ENCODE measurements at regions of chr2 and their contacts with region 1.

Region 1: GRCh38 chr2:8303322-8303832 is 378.5 kb upstream of the ID2 start:
- DNase-seq: peak; percentile 77 to 89 (median 79)
- H3K4me3 ChIP-seq: peak overlapping the region in 1 of 3 experiments; percentile 6
- H3K4me3 Mint-ChIP-seq: peak overlapping the region; percentile 47 to 73
- H3K27ac ChIP-seq: peak overlapping the region; percentile 84 to 85
- H3K27ac Mint-ChIP-seq: peak overlapping the region; percentile 93 to 96 (median 96)
- H3K4me1 ChIP-seq: peaks cover 93 to 100% of the 10 kb centered on the region in 2 donors
- H3K4me1 Mint-ChIP-seq: peaks cover 95% of the 10 kb centered on the region
- H3K27me3 ChIP-seq: no peaks in the 10 kb centered on the region
- H3K27me3 Mint-ChIP-seq: peaks cover under 1 to 3% (median 1%) of the 10 kb centered on the region in 3 donors
- CTCF ChIP-seq: peak; percentile 49

Region 2: GRCh38 chr2:8004250-8004681 is 299.1 kb before region 1 on chr2:
- intact Hi-C with region 1: loop called in 1 of 2 experiments (anchors 10 kb)
- DNase-seq: peak; percentile 78 to 91 (median 85)
- H3K4me3 ChIP-seq: no peak overlapping the region
- H3K4me3 Mint-ChIP-seq: peak overlapping the region in 1 of 2 donors; percentile 5
- H3K27ac ChIP-seq: no peak overlapping the region
- H3K27ac Mint-ChIP-seq: peak overlapping the region in 6 of 7 donors; percentile 52 to 89 (median 67)
- H3K4me1 ChIP-seq: peaks cover 4 to 15% of the 10 kb centered on the region in 2 donors
- H3K4me1 Mint-ChIP-seq: peaks cover 20% of the 10 kb centered on the region
- H3K27me3 ChIP-seq: no peaks in the 10 kb centered on the region
- H3K27me3 Mint-ChIP-seq: peaks cover 0 to 2% (median 0%) of the 10 kb centered on the region in 3 donors
- CTCF ChIP-seq: no peak

Region 3: GRCh38 chr2:8193686-8194615 is 109.4 kb before region 1 on chr2:
- intact Hi-C with region 1: loop called in 1 of 2 experiments (anchors 10 kb)
- DNase-seq: peak in 2 of 3 donors; percentile 26 to 34
- H3K4me3 ChIP-seq: peak overlapping the region; percentile 24 to 63 (median 50)
- H3K4me3 Mint-ChIP-seq: peak overlapping the region; percentile 63 to 87
- H3K27ac ChIP-seq: peak overlapping the region; percentile 74 to 81
- H3K27ac Mint-ChIP-seq: peak overlapping the region; percentile 57 to 90 (median 84)
- H3K4me1 ChIP-seq: peaks cover 24 to 26% of the 10 kb centered on the region in 2 donors
- H3K4me1 Mint-ChIP-seq: peaks cover 26% of the 10 kb centered on the region
- H3K27me3 ChIP-seq: no peaks in the 10 kb centered on the region
- H3K27me3 Mint-ChIP-seq: peaks cover 0 to 2% (median 0%) of the 10 kb centered on the region in 3 donors
- CTCF ChIP-seq: no peak

Region 4: GRCh38 chr2:8252997-8253694 is 50.2 kb before region 1 on chr2:
- intact Hi-C with region 1: no loop called
- DNase-seq: peak in 1 of 3 donors; percentile 46
- H3K4me3 ChIP-seq: no peak overlapping the region
- H3K4me3 Mint-ChIP-seq: no peak overlapping the region
- H3K27ac ChIP-seq: no peak overlapping the region
- H3K27ac Mint-ChIP-seq: peak overlapping the region in 2 of 7 donors; percentile 27 to 35
- H3K4me1 ChIP-seq: peaks cover 12 to 14% of the 10 kb centered on the region in 2 donors
- H3K4me1 Mint-ChIP-seq: peaks cover 17% of the 10 kb centered on the region
- H3K27me3 ChIP-seq: no peaks in the 10 kb centered on the region
- H3K27me3 Mint-ChIP-seq: peaks cover 0 to 2% (median 2%) of the 10 kb centered on the region in 3 donors
- CTCF ChIP-seq: no peak

Region 5: DNA sequence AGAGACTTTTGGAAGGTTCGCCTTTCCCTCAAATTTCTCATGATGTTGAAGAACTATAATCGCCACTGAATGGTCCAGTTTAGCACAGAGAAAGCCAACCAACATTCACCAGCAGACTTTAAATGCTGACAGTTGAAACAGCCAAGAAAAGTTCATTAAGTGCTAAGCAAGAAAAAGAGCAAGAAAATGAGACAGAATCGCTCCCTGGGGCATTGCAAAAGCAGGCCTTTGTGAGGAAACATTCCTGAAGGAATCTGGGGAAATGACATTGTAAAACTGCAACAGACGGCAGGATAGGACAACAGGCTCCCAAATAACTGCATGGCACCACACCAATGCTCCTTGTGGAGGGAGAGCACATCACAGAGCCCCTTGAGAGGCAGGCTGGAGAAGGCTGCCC is 109.2 kb after region 1 on chr2:
- intact Hi-C with region 1: loop called in 1 of 2 experiments (anchors 10 kb)
- DNase-seq: no peak
- H3K4me3 ChIP-seq: no peak overlapping the region
- H3K4me3 Mint-ChIP-seq: peak overlapping the region in 1 of 2 donors; percentile 46
- H3K27ac ChIP-seq: no peak overlapping the region
- H3K27ac Mint-ChIP-seq: peak overlapping the region in 4 of 7 donors; percentile 23 to 51 (median 40)
- H3K4me1 ChIP-seq: peaks cover 62 to 73% of the 10 kb centered on the region in 2 donors
- H3K4me1 Mint-ChIP-seq: peaks cover 73% of the 10 kb centered on the region
- H3K27me3 ChIP-seq: no peaks in the 10 kb centered on the region
- H3K27me3 Mint-ChIP-seq: peaks cover 0 to 2% (median under 1%) of the 10 kb centered on the region in 3 donors
- CTCF ChIP-seq: no peak

Region 6: DNA sequence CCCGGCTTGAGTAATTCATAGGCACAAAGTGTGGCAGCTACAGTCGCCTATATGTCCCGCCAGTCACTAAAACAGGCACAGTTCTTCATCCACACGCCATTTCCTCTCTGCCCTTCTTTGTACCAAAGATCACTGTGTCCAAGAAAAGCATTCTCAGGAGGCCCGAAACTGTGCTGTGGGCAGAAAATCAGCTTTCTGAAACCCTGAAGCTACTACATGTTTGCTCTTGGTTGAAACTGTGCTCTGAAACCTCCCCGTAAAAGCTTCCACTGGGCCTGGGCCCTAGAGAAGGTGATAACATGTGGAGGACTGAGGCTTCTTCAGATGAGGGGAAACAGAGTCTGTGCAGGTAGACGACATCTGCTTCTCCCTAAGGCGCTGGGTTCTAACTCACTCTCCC is 302.8 kb after region 1 on chr2:
- intact Hi-C with region 1: loop called in 1 of 2 experiments (anchors 10 kb)
- DNase-seq: no peak
- H3K4me3 ChIP-seq: no peak overlapping the region
- H3K4me3 Mint-ChIP-seq: no peak overlapping the region
- H3K27ac ChIP-seq: no peak overlapping the region
- H3K27ac Mint-ChIP-seq: peak overlapping the region in 1 of 7 donors; percentile 41
- H3K4me1 ChIP-seq: peaks cover 21 to 27% of the 10 kb centered on the region in 2 donors
- H3K4me1 Mint-ChIP-seq: peaks cover 29% of the 10 kb centered on the region
- H3K27me3 ChIP-seq: no peaks in the 10 kb centered on the region
- H3K27me3 Mint-ChIP-seq: peaks cover 0 to 4% (median 3%) of the 10 kb centered on the region in 3 donors
- CTCF ChIP-seq: no peak

Measured in CD14-positive monocyte (primary cell).